HCT116 (cell line): ENCODE measurements at regions of chrX and their contacts with region 1.

Region 1: DNA sequence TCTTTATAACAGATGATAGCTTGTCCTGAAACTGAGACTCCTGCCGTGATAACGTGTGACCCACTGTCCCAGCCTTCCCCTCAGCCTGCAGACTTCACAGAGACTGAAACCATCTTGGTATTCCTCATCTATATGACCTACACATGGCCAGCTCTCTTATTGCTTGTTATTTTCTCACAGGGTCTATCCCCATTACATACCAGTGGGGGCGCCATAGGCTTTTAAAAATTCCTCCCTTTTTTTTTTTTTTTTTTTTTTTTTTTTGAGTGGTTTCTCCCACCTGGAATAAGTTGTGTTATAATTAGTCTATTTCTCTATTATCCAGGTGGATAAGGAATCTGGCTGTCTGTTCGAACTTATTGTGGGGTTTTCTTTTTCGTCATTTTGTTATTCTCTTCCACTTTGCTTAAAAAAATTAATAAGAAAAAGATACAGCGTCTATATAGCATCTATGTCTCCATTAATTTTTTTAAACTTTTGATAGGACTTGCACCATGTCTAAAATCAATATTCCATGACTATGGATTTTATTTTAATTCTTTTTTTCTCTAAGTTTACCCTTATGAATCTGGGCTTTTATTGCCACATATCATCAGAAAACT is 47.2 kb downstream of the GYG2 start:
- DNase-seq: no peak
- ATAC-seq: peak; percentile 75
- H3K4me3 ChIP-seq: no peak overlapping the region
- H3K27ac ChIP-seq: no peak overlapping the region
- H3K4me1 ChIP-seq: peaks cover 0 to 3% of the 10 kb centered on the region in 2 experiments; a peak in 1 of 4 replicates
- H3K27me3 ChIP-seq: no peaks in the 10 kb centered on the region
- CTCF ChIP-seq: peak; percentile 24 to 58 (median 47); a peak in 5 of 6 replicates
- POLR2A ChIP-seq: no peak
- RAD21 ChIP-seq: peak; percentile 51

Region 2: GRCh38 chrX:2707334-2707760 is 168.6 kb before region 1 on chrX:
- CTCF ChIA-PET with region 1: no interaction called
- POLR2A ChIA-PET with region 1: no interaction called
- RAD21 ChIA-PET with region 1: no interaction called
- intact Hi-C with region 1: no loop called
- DNase-seq: peak; percentile 64
- ATAC-seq: peak; percentile 68
- H3K4me3 ChIP-seq: no peak overlapping the region
- H3K27ac ChIP-seq: no peak overlapping the region
- H3K4me1 ChIP-seq: peaks cover 11 to 46% of the 10 kb centered on the region in 2 experiments
- H3K27me3 ChIP-seq: no peaks in the 10 kb centered on the region
- CTCF ChIP-seq: no peak
- POLR2A ChIP-seq: no peak
- RAD21 ChIP-seq: no peak

Region 3: GRCh38 chrX:3037218-3037617 is 161.3 kb after region 1 on chrX:
- CTCF ChIA-PET with region 1: interaction called, 5 read pairs
- POLR2A ChIA-PET with region 1: no interaction called
- RAD21 ChIA-PET with region 1: no interaction called
- intact Hi-C with region 1: loop called (anchors 5 kb)
- DNase-seq: no peak
- ATAC-seq: no peak
- H3K4me3 ChIP-seq: no peak overlapping the region
- H3K27ac ChIP-seq: no peak overlapping the region
- H3K4me1 ChIP-seq: no peaks in the 10 kb centered on the region; a peak in 1 of 4 replicates
- H3K27me3 ChIP-seq: no peaks in the 10 kb centered on the region
- CTCF ChIP-seq: no peak
- POLR2A ChIP-seq: no peak
- RAD21 ChIP-seq: no peak